ENCODE measurements at regions of chr6 and their contacts with region 1.

Region 1: GRCh38 chr6:38584731-38585130 is 55.0 kb downstream of the BTBD9 start:
- DNase-seq: no peak
- H3K4me3 ChIP-seq: no peak overlapping the region
- H3K27ac ChIP-seq: no peak overlapping the region
- H3K4me1 ChIP-seq: peaks cover 15% of the 10 kb centered on the region
- H3K27me3 ChIP-seq: no peaks in the 10 kb centered on the region
- CTCF ChIP-seq: no peak

Region 2: GRCh38 chr6:38215225-38215624 is 369.5 kb before region 1 on chr6:
- CTCF ChIA-PET with region 1: no interaction called
- dilution Hi-C with region 1: no loop called
- in situ Hi-C with region 1: no loop called
- intact Hi-C with region 1: loop called (anchors 5 kb)
- DNase-seq: no peak
- H3K4me3 ChIP-seq: no peak overlapping the region
- H3K27ac ChIP-seq: no peak overlapping the region
- H3K4me1 ChIP-seq: no peaks in the 10 kb centered on the region
- H3K27me3 ChIP-seq: no peaks in the 10 kb centered on the region
- CTCF ChIP-seq: no peak

Region 3: GRCh38 chr6:38631186-38631783 is 46.6 kb after region 1 on chr6:
- CTCF ChIA-PET with region 1: no interaction called
- dilution Hi-C with region 1: no loop called
- in situ Hi-C with region 1: no loop called
- intact Hi-C with region 1: no loop called
- DNase-seq: no peak
- H3K4me3 ChIP-seq: no peak overlapping the region
- H3K27ac ChIP-seq: no peak overlapping the region
- H3K4me1 ChIP-seq: no peaks in the 10 kb centered on the region
- H3K27me3 ChIP-seq: no peaks in the 10 kb centered on the region
- CTCF ChIP-seq: no peak

Region 4: DNA sequence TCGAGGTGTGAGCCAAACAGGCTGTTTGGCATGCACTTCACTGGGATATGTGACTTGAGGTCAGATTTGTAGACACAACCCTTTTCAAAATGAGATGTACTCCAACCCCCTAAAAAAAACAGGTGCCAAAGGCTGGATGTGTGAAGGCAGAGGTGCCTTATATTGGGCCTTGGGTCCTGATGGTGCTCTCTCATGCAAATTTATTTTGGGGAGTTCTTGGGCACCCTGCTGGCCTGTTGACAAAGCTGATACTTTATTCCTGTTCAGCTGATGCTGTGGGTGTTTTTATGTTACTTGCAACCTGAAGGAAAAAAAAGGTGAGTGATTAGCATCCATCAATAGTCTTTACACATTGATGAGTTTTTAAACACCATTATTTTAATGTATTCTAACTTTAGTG is 251.9 kb after region 1 on chr6:
- CTCF ChIA-PET with region 1: no interaction called
- dilution Hi-C with region 1: no loop called
- in situ Hi-C with region 1: no loop called
- intact Hi-C with region 1: no loop called
- DNase-seq: no peak
- H3K4me3 ChIP-seq: no peak overlapping the region
- H3K27ac ChIP-seq: no peak overlapping the region
- H3K4me1 ChIP-seq: no peaks in the 10 kb centered on the region
- H3K27me3 ChIP-seq: no peaks in the 10 kb centered on the region
- CTCF ChIP-seq: no peak

Measured in mammary epithelial cell (primary cell).